PC-9 (cell line): ENCODE measurements at regions of chr3 and their contacts with region 1.

Region 1: GRCh38 chr3:157130467-157131251 is 29.3 kb downstream of the CCNL1 start:
- DNase-seq: peak; percentile 92 to 98
- H3K4me3 ChIP-seq: peak overlapping the region; percentile 43; the same call in 1 of the 2 replicates
- H3K27ac ChIP-seq: peak overlapping the region; percentile 94
- H3K4me1 ChIP-seq: peaks cover 77% of the 10 kb centered on the region
- H3K27me3 ChIP-seq: no peaks in the 10 kb centered on the region
- CTCF ChIP-seq: peak; percentile 94

Region 2: GRCh38 chr3:156456771-156457224 is 673.9 kb before region 1 on chr3:
- CTCF ChIA-PET with region 1: no interaction called
- POLR2A ChIA-PET with region 1: no interaction called
- intact Hi-C with region 1: loop called (anchors 2 kb)
- DNase-seq: peak; percentile 72 to 87
- H3K4me3 ChIP-seq: peak overlapping the region; percentile 38; the same call in 1 of the 2 replicates
- H3K27ac ChIP-seq: peak overlapping the region; percentile 74
- H3K4me1 ChIP-seq: peaks cover 22% of the 10 kb centered on the region
- H3K27me3 ChIP-seq: no peaks in the 10 kb centered on the region
- CTCF ChIP-seq: no peak

Region 3: DNA sequence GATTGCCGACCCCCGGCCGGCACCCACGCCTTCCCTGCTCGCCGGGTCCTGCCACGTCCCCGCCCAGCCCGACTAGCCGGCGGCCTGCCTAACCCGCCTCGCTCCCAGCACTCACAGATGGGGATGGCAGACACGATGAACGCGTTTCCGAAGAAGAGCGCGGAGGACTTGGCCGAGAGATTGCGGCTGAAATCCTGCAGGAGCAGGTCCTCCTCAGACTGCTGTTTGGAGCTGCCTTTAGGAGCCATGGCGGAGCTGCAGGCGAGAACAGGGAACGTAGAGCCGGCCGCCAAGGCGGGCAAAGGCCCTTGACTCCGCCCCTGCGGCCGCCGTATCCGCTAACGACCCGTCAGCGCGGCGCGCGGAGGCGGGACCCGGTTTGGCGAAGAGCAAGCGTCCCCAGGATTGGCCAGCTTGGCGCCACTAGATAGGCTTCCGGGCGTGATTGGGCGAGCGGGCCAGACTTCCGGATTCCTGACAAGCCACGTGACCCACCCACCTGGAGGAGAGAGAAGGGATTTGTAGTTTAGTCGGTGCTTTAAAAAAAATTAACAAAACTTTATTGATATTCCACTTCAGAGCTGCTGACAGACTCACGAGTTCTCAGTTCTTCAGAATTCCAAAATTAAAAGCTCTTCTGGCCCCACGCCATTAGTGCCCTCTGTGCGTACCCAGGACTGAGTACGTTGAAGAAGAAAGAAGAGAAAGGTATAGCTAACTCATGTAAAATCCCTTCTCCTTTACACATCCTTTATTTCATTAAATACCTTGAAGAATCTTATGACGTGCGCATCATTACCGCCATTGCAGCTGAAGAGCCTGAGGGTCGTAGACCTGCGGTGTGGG is 575.6 kb before region 1 on chr3 and contains the start of gene SSR3:
- CTCF ChIA-PET with region 1: no interaction called
- POLR2A ChIA-PET with region 1: no interaction called
- intact Hi-C with region 1: loop called (anchors 1 kb)
- DNase-seq: peak; percentile 98 to 99
- H3K4me3 ChIP-seq: peak within 1 kb of the TSS; percentile 99
- H3K27ac ChIP-seq: peak within 1 kb of the TSS; percentile 83
- H3K4me1 ChIP-seq: peaks cover 35% of the 10 kb centered on the region
- H3K27me3 ChIP-seq: no peaks in the 10 kb centered on the region
- CTCF ChIP-seq: peak; percentile 19; the same call in 1 of the 2 replicates
- total RNA-seq, gene SSR3: 117 and 152 TPM in 2 replicates

Region 4: GRCh38 chr3:156816800-156817645 is 313.6 kb before region 1 on chr3:
- CTCF ChIA-PET with region 1: no interaction called
- POLR2A ChIA-PET with region 1: no interaction called
- intact Hi-C with region 1: loop called (anchors 1 kb)
- DNase-seq: peak; percentile 86 to 92
- H3K4me3 ChIP-seq: peak overlapping the region; percentile 87
- H3K27ac ChIP-seq: peak overlapping the region; percentile 97
- H3K4me1 ChIP-seq: peaks cover 71% of the 10 kb centered on the region
- H3K27me3 ChIP-seq: no peaks in the 10 kb centered on the region
- CTCF ChIP-seq: peak; percentile 17; the same call in 1 of the 2 replicates

Region 5: DNA sequence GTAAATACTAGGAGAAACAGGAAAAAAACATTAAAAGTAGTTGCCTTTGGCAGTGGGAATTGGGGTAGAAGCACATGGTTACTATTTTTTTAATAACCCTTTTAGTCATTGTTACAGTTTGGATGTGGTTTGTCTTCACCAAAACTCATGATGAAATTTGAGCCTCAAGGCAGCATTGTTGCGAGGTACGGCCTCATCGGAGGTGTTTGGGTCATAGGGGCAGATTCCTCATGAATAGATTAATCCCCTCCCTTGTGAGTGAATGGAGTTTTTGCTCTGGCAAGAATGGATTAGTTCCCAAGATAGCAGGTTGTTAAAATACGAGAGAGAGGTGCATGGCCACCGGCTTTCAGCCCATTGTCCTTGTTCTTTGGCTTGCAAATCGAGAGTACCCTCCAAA is 211.9 kb before region 1 on chr3:
- CTCF ChIA-PET with region 1: no interaction called
- POLR2A ChIA-PET with region 1: no interaction called
- intact Hi-C with region 1: loop called (anchors 10 kb)
- DNase-seq: no peak
- H3K4me3 ChIP-seq: no peak overlapping the region
- H3K27ac ChIP-seq: no peak overlapping the region
- H3K4me1 ChIP-seq: no peaks in the 10 kb centered on the region
- H3K27me3 ChIP-seq: no peaks in the 10 kb centered on the region
- CTCF ChIP-seq: no peak

Region 6: DNA sequence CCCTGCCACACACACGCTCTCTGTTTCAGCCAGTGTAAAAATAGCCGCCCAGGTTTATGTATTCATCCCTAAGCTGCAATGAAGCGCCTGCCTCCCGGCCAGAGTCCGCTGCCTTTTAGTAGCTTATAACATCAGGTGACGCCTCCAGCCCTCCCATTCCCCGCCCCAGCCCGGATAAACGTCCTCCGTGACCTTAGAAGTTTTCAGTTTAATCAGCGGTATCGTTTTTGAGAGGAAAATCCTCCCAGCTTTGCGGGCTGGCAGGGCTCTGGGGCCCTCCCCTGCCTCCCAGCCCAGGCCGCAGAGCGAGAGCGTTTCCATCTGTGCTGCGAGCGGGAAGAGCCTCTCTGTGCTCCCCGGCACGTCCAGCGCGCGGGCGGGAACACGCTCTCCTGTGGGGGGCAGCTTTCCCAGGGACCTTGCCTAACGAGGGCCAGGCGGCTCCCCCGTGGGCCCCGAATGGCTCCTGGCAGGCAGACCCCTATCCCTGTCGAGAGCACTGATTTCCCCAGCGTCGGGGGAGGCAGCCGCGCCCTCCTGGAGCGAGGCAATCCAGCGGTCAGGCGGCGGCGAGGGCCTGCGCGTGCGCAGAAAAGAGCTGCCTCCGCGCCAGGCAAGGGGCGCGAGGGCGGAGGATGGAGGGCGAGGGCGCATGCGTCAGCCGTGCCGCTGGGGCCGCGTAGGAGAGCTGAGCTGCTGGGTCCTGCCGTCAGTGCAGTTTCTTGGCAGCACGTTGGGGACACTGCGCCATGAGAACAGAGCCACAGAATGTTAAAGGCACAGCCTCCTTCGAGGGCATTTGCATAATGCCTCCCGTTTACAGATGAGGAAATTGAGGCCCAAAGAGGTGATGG is 41.8 kb before region 1 on chr3:
- CTCF ChIA-PET with region 1: interaction called, 3 read pairs
- POLR2A ChIA-PET with region 1: interaction called, 41 read pairs
- intact Hi-C with region 1: loop called (anchors 1 kb)
- DNase-seq: peak; percentile 90 to 97
- H3K4me3 ChIP-seq: peak overlapping the region; percentile 62
- H3K27ac ChIP-seq: peak overlapping the region; percentile 99
- H3K4me1 ChIP-seq: peaks cover 46% of the 10 kb centered on the region
- H3K27me3 ChIP-seq: no peaks in the 10 kb centered on the region
- CTCF ChIP-seq: no peak

Region 7: DNA sequence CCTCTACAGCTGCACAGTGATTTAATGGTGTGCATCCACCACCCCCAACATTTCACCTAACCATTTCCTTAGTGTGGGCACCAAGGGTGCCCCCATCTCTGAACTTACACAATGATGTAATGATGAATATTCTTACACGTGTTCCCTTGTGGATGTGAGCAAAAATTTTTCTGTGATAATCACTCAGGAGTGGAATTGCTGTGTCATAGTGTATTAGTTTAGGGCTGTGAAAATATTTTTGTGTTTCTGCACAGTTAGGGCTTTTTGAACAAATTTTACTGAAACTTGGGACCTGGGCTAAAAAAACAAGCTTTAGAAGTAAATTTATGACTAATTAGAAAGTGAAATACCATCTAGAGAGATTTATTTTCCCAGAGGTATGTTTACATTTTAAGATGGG is 163.8 kb after region 1 on chr3:
- CTCF ChIA-PET with region 1: no interaction called
- POLR2A ChIA-PET with region 1: no interaction called
- intact Hi-C with region 1: no loop called
- DNase-seq: no peak
- H3K4me3 ChIP-seq: no peak overlapping the region
- H3K27ac ChIP-seq: no peak overlapping the region
- H3K4me1 ChIP-seq: no peaks in the 10 kb centered on the region
- H3K27me3 ChIP-seq: no peaks in the 10 kb centered on the region
- CTCF ChIP-seq: no peak